Activated naive CD4-positive, alpha-beta T cell treated with anti-CD3 and anti-CD28 coated beads, Interleukin-2, amount 10 ng/mL, durations not matched to agents 7 days and 5 days (primary cell): ENCODE measurements at regions of chr1 and their contacts with region 1.

Region 1: DNA sequence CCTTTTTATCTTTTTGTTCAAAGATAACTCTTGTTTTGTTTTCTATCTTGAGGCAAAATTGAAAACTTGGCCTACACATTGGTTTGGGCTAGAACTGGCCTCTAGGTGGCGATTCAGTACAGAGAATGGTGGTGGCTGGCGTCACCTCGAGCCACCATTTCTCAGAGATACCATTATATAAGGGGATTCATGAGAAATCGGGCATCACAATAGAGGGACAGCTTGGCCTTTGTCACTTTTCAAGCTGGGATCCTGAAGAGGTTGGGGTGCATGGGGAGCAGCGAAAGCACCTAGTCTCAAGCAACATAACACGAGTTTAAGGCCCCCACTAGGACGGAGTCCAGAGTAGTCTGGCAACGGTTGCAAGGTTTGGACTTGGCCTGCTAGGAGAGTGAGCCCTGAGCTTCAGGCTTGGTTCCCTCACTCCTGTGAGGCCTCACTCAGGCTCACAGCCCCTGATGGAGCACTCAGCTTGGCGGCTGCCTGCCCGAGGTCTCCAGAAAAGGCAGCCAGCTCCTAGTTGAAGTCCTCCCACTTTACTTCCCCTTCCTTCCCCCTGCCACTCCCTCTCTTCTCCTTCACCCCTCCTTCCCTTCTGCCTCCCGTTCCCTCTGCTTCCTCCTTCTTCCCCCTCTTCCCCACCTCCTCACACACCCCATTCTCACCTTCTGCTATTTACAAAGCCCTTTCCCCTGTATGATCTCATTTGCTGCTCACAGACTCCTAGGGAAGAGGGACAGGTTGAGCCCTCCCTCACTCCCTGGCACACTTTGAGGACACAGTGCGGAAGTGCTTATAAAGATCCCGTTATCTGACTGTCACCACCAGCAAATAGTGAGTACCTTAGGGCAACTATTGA is 67.8 kb downstream of the LRIG2 start:
- DNase-seq: peak; percentile 69
- H3K4me3 Mint-ChIP-seq: no peak overlapping the region
- H3K27ac Mint-ChIP-seq: no peak overlapping the region
- H3K4me1 Mint-ChIP-seq: peaks cover 19% of the 10 kb centered on the region
- H3K27me3 Mint-ChIP-seq: no peaks in the 10 kb centered on the region

Region 2: DNA sequence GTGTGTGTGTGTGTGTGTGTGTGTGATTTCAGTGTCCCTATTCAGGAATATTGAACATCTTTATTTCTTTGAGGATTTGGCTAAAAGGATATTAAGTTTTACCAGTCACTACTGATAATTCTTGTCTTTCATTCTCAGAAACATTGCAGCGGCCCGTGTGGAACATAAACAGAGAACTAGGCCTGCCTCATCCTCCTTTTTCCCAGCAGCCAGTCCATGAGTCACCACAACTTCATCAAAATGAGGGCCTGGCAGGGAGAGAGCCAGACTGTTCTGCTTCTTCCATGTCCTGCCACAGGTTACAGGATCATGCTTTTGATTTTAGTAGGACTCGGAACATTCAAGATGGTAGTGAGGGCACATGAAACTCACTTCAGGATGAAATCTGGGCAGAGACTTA is 17.1 kb before region 1 on chr1:
- CTCF ChIA-PET with region 1: no interaction called
- DNase-seq: no peak
- H3K4me3 Mint-ChIP-seq: no peak overlapping the region
- H3K27ac Mint-ChIP-seq: no peak overlapping the region
- H3K4me1 Mint-ChIP-seq: no peaks in the 10 kb centered on the region
- H3K27me3 Mint-ChIP-seq: no peaks in the 10 kb centered on the region

Region 3: DNA sequence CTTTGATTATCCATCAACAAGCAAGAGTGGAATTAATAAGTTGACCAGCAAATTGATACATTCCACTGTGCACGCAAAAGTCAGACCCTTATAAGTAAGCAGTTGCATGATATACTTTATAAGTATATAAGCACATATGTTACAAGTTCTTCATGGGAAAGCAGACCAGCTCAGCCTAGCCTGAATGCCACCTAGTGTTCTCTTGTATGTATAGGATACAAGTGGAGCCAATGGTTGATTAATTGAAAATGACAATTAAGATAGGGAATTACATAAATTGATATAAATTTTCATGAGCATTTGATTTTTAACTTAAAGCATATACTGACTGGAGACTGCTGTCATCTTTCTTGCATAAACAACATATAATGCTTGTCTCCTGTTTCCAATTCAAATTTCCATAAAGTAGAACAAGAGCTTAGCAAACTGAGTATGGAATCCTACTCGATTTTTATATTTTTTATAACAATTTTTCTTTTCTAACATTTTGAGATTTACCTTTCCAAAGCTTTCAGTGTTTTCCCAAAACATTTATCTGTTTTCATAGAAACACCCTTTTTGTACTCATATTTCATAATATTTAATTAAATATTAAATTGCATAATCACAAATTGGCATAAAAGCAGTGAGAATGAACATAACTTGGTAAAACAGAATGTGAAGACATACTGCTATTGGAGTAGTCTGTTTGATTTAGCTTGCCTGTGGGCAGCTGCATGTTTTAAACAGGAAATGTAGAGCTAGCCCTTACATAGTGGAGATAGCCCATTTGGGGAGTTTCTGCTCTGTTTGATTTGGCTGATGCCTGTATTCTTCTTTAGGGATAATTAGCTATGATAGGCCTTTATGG is 312.3 kb after region 1 on chr1:
- CTCF ChIA-PET with region 1: interaction called, 12 read pairs
- DNase-seq: peak; percentile 29
- H3K4me3 Mint-ChIP-seq: no peak overlapping the region
- H3K27ac Mint-ChIP-seq: no peak overlapping the region
- H3K4me1 Mint-ChIP-seq: no peaks in the 10 kb centered on the region
- H3K27me3 Mint-ChIP-seq: peaks cover 5% of the 10 kb centered on the region

Region 4: GRCh38 chr1:113677250-113678158 is 536.7 kb after region 1 on chr1:
- CTCF ChIA-PET with region 1: interaction called, 12 read pairs
- DNase-seq: no peak
- H3K4me3 Mint-ChIP-seq: no peak overlapping the region
- H3K27ac Mint-ChIP-seq: no peak overlapping the region
- H3K4me1 Mint-ChIP-seq: peaks cover 4% of the 10 kb centered on the region
- H3K27me3 Mint-ChIP-seq: no peaks in the 10 kb centered on the region